Common myeloid progenitor, CD34-positive (primary cell): ENCODE measurements at regions of chr2 and their contacts with region 1.

Region 1: GRCh38 chr2:232292395-232293154 is 86.0 kb upstream of the ALPP start:
- DNase-seq: peak; percentile 50 to 77 (median 70)
- H3K4me3 ChIP-seq: no peak overlapping the region
- H3K27ac ChIP-seq: no peak overlapping the region
- H3K4me1 ChIP-seq: peaks cover 0 to 15% (median 13%) of the 10 kb centered on the region in 4 experiments
- H3K27me3 ChIP-seq: no peaks in the 10 kb centered on the region

Region 2: GRCh38 chr2:232236200-232236599 is 56.4 kb before region 1 on chr2:
- CTCF ChIA-PET with region 1: no interaction called
- POLR2A ChIA-PET with region 1: no interaction called
- DNase-seq: peak in 1 of 3 donors; percentile 12
- H3K4me3 ChIP-seq: no peak overlapping the region
- H3K27ac ChIP-seq: no peak overlapping the region
- H3K4me1 ChIP-seq: peaks cover 0 to 7% (median 3%) of the 10 kb centered on the region in 4 experiments
- H3K27me3 ChIP-seq: no peaks in the 10 kb centered on the region

Region 3: GRCh38 chr2:232310121-232310520 is 17.5 kb after region 1 on chr2:
- CTCF ChIA-PET with region 1: interaction called, 54 read pairs
- POLR2A ChIA-PET with region 1: no interaction called
- DNase-seq: no peak
- H3K4me3 ChIP-seq: no peak overlapping the region
- H3K27ac ChIP-seq: no peak overlapping the region
- H3K4me1 ChIP-seq: peaks cover 7 to 27% (median 21%) of the 10 kb centered on the region in 4 experiments
- H3K27me3 ChIP-seq: no peaks in the 10 kb centered on the region

Region 4: GRCh38 chr2:232315049-232315922 is 22.7 kb after region 1 on chr2:
- CTCF ChIA-PET with region 1: interaction called, 54 read pairs
- POLR2A ChIA-PET with region 1: no interaction called
- DNase-seq: peak; percentile 94 to 99 (median 98)
- H3K4me3 ChIP-seq: peak overlapping the region in 4 of 7 experiments; percentile 6 to 49 (median 33)
- H3K27ac ChIP-seq: peak overlapping the region in 1 of 2 experiments; percentile 67
- H3K4me1 ChIP-seq: peaks cover 22 to 66% (median 53%) of the 10 kb centered on the region in 4 experiments
- H3K27me3 ChIP-seq: no peaks in the 10 kb centered on the region

Region 5: DNA sequence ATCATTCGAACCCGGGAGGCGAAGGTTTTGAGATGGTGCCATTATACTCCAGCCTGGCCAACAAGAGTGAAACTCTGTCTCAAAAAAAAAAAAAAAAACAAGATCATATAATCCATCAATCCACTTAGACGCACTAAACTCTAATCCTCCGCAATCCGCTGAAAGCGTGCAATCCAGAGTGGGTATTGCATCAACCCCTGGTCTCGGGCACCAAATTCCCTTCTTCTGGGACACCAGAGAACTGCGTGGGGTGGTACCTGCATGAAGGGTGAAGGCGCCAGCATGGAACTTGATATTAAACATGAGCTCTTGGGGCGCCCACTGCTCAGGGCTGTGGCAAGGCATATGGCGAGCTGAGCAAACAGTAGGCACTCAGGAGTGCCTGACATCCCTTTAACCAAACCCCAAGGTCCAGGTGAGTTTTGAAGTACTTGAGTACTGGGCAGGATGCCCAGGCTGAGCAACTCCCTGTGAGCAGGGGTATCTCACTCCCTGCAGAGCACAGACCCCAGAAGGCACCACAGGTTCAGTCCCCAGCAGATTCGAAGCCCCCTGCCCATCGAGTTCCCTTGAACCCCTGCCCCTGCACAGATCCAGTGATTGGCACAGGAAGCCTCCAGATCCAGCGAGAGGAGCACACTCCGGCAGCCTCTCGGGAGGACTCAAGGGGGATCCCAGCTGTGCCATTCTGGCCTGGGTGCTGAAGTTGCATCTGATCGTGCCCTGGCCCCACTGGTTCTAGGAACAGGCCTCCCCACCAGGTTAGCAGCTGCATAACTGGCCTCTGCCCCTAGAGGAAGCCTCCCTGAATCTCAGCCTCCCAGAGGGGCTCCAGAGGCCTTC is 171.3 kb after region 1 on chr2:
- CTCF ChIA-PET with region 1: no interaction called
- POLR2A ChIA-PET with region 1: no interaction called
- DNase-seq: no peak
- H3K4me3 ChIP-seq: no peak overlapping the region
- H3K27ac ChIP-seq: no peak overlapping the region
- H3K4me1 ChIP-seq: no peaks in the 10 kb centered on the region
- H3K27me3 ChIP-seq: peaks cover 0 to 24% (median 5%) of the 10 kb centered on the region in 5 experiments